Left cardiac atrium (tissue), 4 donors: ENCODE measurements at regions of chr9 and their contacts with region 1.

Region 1: DNA sequence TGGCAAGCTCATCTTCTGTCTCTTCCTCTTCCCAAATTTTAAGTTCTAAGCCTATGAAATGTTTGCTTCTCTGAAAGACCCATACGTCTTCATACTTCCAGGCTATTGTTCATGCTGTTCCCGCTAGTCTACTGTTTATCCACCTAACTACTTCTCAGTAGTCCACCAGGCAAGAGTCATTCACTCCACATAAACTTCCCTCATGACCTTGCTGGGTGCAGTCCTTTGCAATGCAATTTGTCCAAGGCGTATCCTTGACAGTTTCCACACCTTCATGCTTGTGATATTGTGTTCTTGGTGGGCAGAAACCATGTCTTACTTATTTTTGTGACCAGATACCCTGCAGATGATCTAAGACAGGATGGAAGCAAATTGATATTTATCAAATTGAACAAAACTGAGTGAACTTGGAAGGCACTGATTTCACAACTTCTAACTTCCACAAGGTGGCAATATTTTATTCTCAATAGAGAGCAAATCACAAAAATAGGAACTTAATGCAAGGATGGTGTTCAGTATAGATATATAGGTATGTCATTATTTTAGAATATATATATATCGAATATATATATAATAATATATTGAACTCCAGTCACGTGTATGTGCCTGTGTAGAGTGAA is 30.3 kb downstream of the TYRP1 start:
- DNase-seq: no peak
- ATAC-seq: no peak

Region 2: DNA sequence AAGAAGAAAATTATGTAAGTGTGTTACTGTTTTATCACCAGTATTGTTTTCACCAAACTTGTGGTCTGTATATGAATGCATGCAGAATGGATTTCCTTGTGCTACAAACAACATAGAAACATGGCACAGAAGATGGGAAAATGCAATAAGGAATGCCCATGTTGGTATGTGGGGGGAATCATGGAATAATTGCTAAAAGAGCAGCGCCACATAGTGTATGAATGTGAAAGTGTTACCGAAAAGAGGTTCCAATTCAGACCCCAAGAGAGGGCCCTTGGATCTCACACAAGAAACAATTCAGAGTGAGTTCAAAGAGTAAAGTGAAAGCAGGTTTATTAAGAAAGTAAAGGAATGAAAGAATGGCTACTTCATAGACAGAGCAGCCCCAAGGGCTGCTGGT is 56.7 kb before region 1 on chr9:
- intact Hi-C with region 1: no loop called
- DNase-seq: no peak
- ATAC-seq: no peak

Region 3: DNA sequence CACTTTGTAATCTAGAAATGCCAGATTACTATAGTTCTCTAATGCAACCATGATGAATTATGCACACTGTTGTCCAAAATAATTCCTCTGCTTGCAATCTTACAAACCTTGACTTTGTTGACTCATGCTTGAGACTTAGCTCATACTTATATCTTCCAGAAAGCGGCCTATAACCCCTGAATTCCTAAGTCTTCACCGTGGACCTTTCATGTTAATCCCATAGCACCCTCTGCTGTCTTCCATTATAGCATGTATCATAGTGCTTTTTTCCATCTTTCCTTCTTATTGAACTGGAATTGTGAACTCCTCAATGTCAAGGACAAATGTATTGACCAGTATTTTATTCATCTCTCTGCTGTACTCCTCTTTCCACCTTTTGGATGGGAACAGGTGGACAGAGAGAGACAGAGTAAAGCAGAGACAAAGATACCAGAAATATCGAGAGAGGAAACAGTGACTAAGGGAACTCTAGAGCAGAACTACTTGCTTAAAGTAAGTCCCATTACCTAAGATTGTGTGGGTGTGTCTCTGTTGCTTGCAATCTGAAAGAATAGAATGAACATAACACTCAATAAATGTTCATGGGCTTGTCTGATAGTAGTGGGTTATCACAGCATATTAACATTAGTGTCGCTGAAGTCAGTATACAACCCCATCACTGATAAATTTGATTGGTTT is 161.4 kb after region 1 on chr9:
- intact Hi-C with region 1: loop called (anchors 2 to 10 kb)
- DNase-seq: no peak
- ATAC-seq: peak; percentile 61 to 89

Region 4: GRCh38 chr9:12988253-12988652 is 264.7 kb after region 1 on chr9:
- intact Hi-C with region 1: loop called in 1 of 2 experiments (anchors 10 kb)
- DNase-seq: no peak
- ATAC-seq: no peak

Region 5: GRCh38 chr9:13033959-13034693 is 310.6 kb after region 1 on chr9:
- intact Hi-C with region 1: loop called in 1 of 2 experiments (anchors 5 kb)
- DNase-seq: peak; percentile 72
- ATAC-seq: peak; percentile 92 to 93

Region 6: GRCh38 chr9:13088720-13089427 is 365.4 kb after region 1 on chr9:
- intact Hi-C with region 1: loop called (anchors 2 to 5 kb)
- DNase-seq: peak; percentile 20
- ATAC-seq: peak; percentile 70 to 71